Naive thymus-derived CD4-positive, alpha-beta T cell (primary cell): ENCODE measurements at regions of chr2 and their contacts with region 1.

Region 1: DNA sequence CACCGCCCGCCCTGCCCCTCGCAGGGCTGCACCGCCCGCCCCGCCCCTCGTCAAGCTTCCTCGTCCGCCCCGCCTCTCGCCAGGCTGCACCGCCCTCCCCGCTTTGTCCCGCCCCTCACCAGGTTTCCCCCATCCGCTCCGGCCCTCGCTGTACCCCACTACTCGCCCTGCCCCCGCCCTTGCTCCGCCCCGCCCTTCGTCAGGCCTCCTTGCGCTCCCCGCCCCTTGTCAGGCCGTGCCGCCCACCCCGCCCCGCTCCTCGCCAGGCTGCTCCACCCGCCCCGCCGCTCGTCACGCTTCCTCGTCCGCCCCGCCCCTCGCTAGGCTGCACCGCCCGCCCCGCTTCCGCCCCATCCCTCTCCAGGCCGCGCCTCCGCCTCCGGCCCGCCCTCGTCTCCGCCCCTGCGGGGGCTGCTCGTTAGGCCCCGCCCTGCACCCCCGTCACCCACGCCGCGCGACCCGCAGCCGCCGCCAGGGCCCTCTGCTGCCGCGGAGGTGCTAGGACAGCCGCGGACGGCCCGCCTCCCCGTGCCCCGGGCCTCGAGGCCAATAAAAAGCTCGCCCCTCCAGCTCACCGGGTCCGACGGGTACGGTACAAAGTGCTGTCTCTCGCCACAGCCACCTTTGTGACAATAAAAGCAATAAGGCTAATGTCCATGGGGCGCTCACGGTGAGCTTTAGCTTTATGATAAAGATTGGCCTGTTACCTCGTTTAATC is 574 bp upstream of the DNPEP start:
- DNase-seq: peak; percentile 97 to 100 (median 98)
- ATAC-seq: peak; percentile 87
- H3K4me3 ChIP-seq: peak overlapping the region; percentile 38
- H3K4me3 Mint-ChIP-seq: peak overlapping the region; percentile 64 to 97 (median 90)
- H3K27ac ChIP-seq: peak overlapping the region; percentile 78
- H3K27ac Mint-ChIP-seq: peak overlapping the region; percentile 73 to 98 (median 91)
- H3K4me1 ChIP-seq: peaks cover 17 to 22% of the 10 kb centered on the region in 2 donors
- H3K4me1 Mint-ChIP-seq: peaks cover 2 to 37% (median 32%) of the 10 kb centered on the region in 7 donors
- H3K27me3 ChIP-seq: no peaks in the 10 kb centered on the region
- H3K27me3 Mint-ChIP-seq: peaks cover 0 to 11% (median 0%) of the 10 kb centered on the region in 5 donors

Region 2: DNA sequence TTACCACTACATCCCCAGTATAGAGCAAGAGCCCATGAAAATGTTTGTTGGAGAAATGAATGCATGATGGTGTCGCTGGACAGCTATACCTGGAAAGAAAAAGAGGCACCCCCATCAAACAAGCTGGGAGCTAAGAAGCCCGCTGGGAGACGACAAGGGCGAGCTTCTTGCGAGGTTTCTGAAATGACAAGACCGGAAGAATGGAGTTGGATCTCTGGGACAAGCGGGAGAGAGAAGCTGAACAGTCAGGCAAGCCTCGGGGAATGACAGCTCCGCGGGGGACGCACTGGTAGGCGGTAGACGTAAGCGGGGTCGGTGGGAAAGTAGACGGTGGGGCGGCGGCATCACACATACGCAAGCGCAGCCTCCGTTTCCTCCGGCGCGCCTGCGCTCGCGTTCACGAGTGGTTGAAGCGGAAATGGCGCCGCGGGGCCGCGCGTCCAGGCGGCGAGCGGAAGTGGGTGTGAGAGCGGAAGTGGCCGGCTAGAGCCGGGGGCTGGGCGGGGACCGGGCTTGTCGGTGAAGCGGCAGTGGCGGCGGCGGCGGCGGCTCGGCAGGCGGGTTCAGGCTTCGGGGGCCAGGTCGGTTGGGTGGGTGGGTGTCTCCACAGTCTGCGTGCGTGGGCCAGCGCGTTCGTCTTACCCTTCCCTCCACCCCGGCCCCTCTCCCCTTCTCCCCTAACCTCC is 1171.5 kb before region 1 on chr2 and contains the start of gene ARPC2:
- CTCF ChIA-PET with region 1: no interaction called
- POLR2A ChIA-PET with region 1: no interaction called
- intact Hi-C with region 1: loop called (anchors 5 kb)
- DNase-seq: peak; percentile 91 to 97 (median 95)
- ATAC-seq: peak; percentile 90
- H3K4me3 ChIP-seq: peak within 1 kb of the TSS; percentile 90
- H3K4me3 Mint-ChIP-seq: peak within 1 kb of the TSS; percentile 90 to 97 (median 94)
- H3K27ac ChIP-seq: peak within 1 kb of the TSS; percentile 99
- H3K27ac Mint-ChIP-seq: peak within 1 kb of the TSS; percentile 94 to 98 (median 97)
- H3K4me1 ChIP-seq: peaks cover 25 to 33% of the 10 kb centered on the region in 2 donors
- H3K4me1 Mint-ChIP-seq: peaks cover 31 to 48% (median 42%) of the 10 kb centered on the region in 7 donors
- H3K27me3 ChIP-seq: no peaks in the 10 kb centered on the region
- H3K27me3 Mint-ChIP-seq: peaks cover 0 to 6% (median 0%) of the 10 kb centered on the region in 5 donors
- total RNA-seq, gene ARPC2: 330 to 694 (median 368) TPM

Region 3: DNA sequence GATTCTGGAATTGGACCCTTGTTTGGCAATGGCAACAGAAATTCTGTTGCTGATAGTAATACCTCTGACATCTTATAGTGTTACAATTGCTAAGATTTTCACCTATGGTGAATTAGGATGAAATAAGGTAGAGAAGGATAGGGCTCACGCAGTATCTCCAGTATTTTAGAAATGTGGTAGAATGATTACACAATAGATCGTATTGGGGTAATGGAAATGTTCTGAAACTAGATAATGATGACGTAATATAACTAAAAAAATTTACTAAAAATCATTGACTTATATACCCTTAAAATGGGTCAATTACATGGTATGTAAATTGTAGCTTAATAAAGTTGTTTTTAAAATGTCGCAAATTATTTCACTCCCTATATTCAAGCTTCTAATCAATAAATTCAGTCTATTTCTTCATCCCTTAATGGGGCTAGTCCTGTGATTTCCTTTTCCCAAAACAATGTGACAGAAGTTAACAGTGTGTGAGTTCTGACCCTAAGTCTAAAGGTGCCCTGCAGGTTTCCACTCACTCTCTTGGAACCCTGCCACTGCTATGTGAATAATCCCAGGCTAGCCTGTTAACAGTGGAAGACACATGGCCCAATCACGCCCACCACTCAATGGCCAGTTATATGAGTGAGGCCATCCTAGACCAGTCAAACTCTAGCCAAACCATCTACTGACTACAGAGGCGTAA is 851.3 kb before region 1 on chr2:
- CTCF ChIA-PET with region 1: no interaction called
- POLR2A ChIA-PET with region 1: no interaction called
- intact Hi-C with region 1: no loop called
- DNase-seq: no peak
- ATAC-seq: no peak
- H3K4me3 ChIP-seq: no peak overlapping the region
- H3K4me3 Mint-ChIP-seq: no peak overlapping the region
- H3K27ac ChIP-seq: no peak overlapping the region
- H3K27ac Mint-ChIP-seq: no peak overlapping the region
- H3K4me1 ChIP-seq: no peaks in the 10 kb centered on the region
- H3K4me1 Mint-ChIP-seq: peaks cover 0 to 16% (median 3%) of the 10 kb centered on the region in 7 donors
- H3K27me3 ChIP-seq: no peaks in the 10 kb centered on the region
- H3K27me3 Mint-ChIP-seq: no peaks in the 10 kb centered on the region

Region 4: GRCh38 chr2:218659258-218659987 is 728.9 kb before region 1 on chr2 and contains the starts of genes BCS1L and ZNF142:
- CTCF ChIA-PET with region 1: no interaction called
- POLR2A ChIA-PET with region 1: no interaction called
- intact Hi-C with region 1: loop called in 1 of 2 experiments (anchors 1 kb)
- DNase-seq: peak; percentile 75 to 95 (median 90)
- ATAC-seq: peak; percentile 99
- H3K4me3 ChIP-seq: peak within 1 kb of the TSS; percentile 83
- H3K4me3 Mint-ChIP-seq: peak within 1 kb of the TSS; percentile 90 to 99 (median 98)
- H3K27ac ChIP-seq: peak within 1 kb of the TSS; percentile 80
- H3K27ac Mint-ChIP-seq: peak within 1 kb of the TSS; percentile 74 to 96 (median 93)
- H3K4me1 ChIP-seq: peaks cover 7 to 15% of the 10 kb centered on the region in 2 donors
- H3K4me1 Mint-ChIP-seq: peaks cover 25 to 45% (median 38%) of the 10 kb centered on the region in 7 donors
- H3K27me3 ChIP-seq: no peaks in the 10 kb centered on the region
- H3K27me3 Mint-ChIP-seq: no peaks in the 10 kb centered on the region
- total RNA-seq, gene BCS1L: 21.4 to 62.0 (median 49.0) TPM
- total RNA-seq, gene ZNF142: 38.7 to 49.8 (median 40.8) TPM

Region 5: GRCh38 chr2:219160186-219161017 is 227.9 kb before region 1 on chr2 and contains the start of gene NHEJ1:
- CTCF ChIA-PET with region 1: no interaction called
- POLR2A ChIA-PET with region 1: interaction called, 5 read pairs
- intact Hi-C with region 1: loop called (anchors 1 kb)
- DNase-seq: peak; percentile 84 to 98 (median 92)
- ATAC-seq: peak; percentile 96
- H3K4me3 ChIP-seq: peak within 1 kb of the TSS; percentile 70
- H3K4me3 Mint-ChIP-seq: peak within 1 kb of the TSS; percentile 88 to 97 (median 93)
- H3K27ac ChIP-seq: peak within 1 kb of the TSS; percentile 77
- H3K27ac Mint-ChIP-seq: peak within 1 kb of the TSS; percentile 81 to 97 (median 93)
- H3K4me1 ChIP-seq: peaks cover 11 to 12% of the 10 kb centered on the region in 2 donors
- H3K4me1 Mint-ChIP-seq: peaks cover 13 to 41% (median 24%) of the 10 kb centered on the region in 7 donors
- H3K27me3 ChIP-seq: no peaks in the 10 kb centered on the region
- H3K27me3 Mint-ChIP-seq: no peaks in the 10 kb centered on the region
- total RNA-seq, gene NHEJ1: 11.4 to 24.0 (median 17.9) TPM

Region 6: GRCh38 chr2:219253753-219254590 is 134.3 kb before region 1 on chr2 and contains the start of gene TUBA4A:
- CTCF ChIA-PET with region 1: interaction called, 4 read pairs
- POLR2A ChIA-PET with region 1: interaction called, 5 read pairs
- intact Hi-C with region 1: loop called (anchors 1 kb)
- DNase-seq: peak; percentile 84 to 94 (median 91)
- ATAC-seq: peak; percentile 92
- H3K4me3 ChIP-seq: peak within 1 kb of the TSS; percentile 79
- H3K4me3 Mint-ChIP-seq: peak within 1 kb of the TSS; percentile 82 to 100 (median 92)
- H3K27ac ChIP-seq: peak within 1 kb of the TSS; percentile 95
- H3K27ac Mint-ChIP-seq: peak within 1 kb of the TSS; percentile 88 to 99 (median 96)
- H3K4me1 ChIP-seq: peaks cover 31 to 38% of the 10 kb centered on the region in 2 donors
- H3K4me1 Mint-ChIP-seq: peaks cover 28 to 54% (median 47%) of the 10 kb centered on the region in 7 donors
- H3K27me3 ChIP-seq: no peaks in the 10 kb centered on the region
- H3K27me3 Mint-ChIP-seq: peaks cover 0 to 3% (median 0%) of the 10 kb centered on the region in 5 donors
- total RNA-seq, gene TUBA4A: 82.9 to 260 (median 183) TPM

Region 7: DNA sequence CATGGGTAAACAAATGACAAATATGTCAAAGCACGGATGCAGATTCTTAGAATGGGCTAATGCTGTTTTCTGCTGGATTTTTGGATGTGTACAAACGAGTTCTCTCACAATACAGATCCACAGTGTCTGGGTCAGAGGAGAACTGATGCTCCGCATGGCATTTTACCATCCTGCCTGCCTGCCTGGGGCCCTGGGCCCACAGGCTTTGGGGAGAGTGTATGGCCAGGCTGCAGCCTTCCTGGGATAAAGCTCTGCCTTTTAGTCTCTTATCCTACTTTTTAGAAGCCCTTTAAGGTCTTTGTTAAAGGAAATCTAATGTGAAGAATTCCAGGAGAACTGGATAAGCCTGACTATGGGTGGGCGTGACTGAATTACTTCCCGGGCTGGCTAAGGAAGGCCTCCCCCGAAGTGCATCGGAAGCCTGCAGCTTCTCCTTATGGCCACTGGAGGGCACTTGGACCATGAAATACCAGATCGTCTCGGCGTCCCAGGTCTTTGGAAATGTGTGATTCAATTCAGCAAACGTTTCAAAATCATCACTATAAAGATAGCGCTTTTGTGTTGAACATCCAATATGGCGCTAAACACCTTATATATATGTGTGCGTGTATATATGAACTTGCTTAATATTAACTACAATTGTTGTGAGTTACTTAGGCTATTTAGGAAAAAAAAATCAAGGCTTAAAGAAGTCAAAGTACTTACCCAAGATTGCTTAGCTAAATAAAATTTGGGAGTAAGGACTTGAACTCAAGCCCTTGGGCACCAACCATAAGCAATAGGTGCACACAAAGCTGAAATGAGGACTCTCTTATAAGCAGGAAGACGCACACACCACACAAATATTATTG is 14.6 kb after region 1 on chr2:
- CTCF ChIA-PET with region 1: interaction called, 16 read pairs
- POLR2A ChIA-PET with region 1: interaction called, 14 read pairs
- intact Hi-C with region 1: loop called in 1 of 2 experiments (anchors 1 kb)
- DNase-seq: peak in 8 of 9 donors; percentile 37 to 70 (median 62)
- ATAC-seq: peak; percentile 89
- H3K4me3 ChIP-seq: no peak overlapping the region
- H3K4me3 Mint-ChIP-seq: no peak overlapping the region
- H3K27ac ChIP-seq: no peak overlapping the region
- H3K27ac Mint-ChIP-seq: no peak overlapping the region
- H3K4me1 ChIP-seq: peaks cover 0 to 3% of the 10 kb centered on the region in 2 donors
- H3K4me1 Mint-ChIP-seq: peaks cover 0 to 9% (median 5%) of the 10 kb centered on the region in 7 donors
- H3K27me3 ChIP-seq: no peaks in the 10 kb centered on the region
- H3K27me3 Mint-ChIP-seq: peaks cover 0 to 13% (median 7%) of the 10 kb centered on the region in 5 donors